ENCODE measurements at regions of chr1 and their contacts with region 1.

Region 1: GRCh38 chr1:20207419-20207959 is 21.2 kb upstream of the PLA2G2C start:
- DNase-seq: no peak
- H3K4me3 ChIP-seq: no peak overlapping the region
- H3K27ac ChIP-seq: no peak overlapping the region
- H3K4me1 ChIP-seq: peaks cover 8% of the 10 kb centered on the region
- H3K27me3 ChIP-seq: no peaks in the 10 kb centered on the region
- CTCF ChIP-seq: no peak
- EP300 ChIP-seq: no peak
- POLR2A ChIP-seq: no peak

Region 2: GRCh38 chr1:20472860-20473711 is 265.6 kb after region 1 on chr1:
- intact Hi-C with region 1: loop called in 1 of 4 experiments (anchors 10 kb)
- DNase-seq: peak; percentile 76 to 88 (median 84)
- H3K4me3 ChIP-seq: no peak overlapping the region
- H3K27ac ChIP-seq: no peak overlapping the region
- H3K4me1 ChIP-seq: peaks cover 13% of the 10 kb centered on the region
- H3K27me3 ChIP-seq: no peaks in the 10 kb centered on the region
- CTCF ChIP-seq: no peak
- EP300 ChIP-seq: no peak
- POLR2A ChIP-seq: no peak